Activated B cell treated with CpG ODN at 0.5 μM for 24 hours (primary cell): ENCODE measurements at regions of chr12 and their contacts with region 1.

Region 1: GRCh38 chr12:76763743-76764675 is at the start of gene ZDHHC17:
- DNase-seq: peak; percentile 96
- ATAC-seq: peak; percentile 87
- H3K4me3 Mint-ChIP-seq: peak within 1 kb of the TSS; percentile 97
- H3K27ac Mint-ChIP-seq: peak within 1 kb of the TSS; percentile 96
- H3K4me1 Mint-ChIP-seq: peaks cover 44% of the 10 kb centered on the region
- H3K27me3 Mint-ChIP-seq: no peaks in the 10 kb centered on the region
- CTCF ChIP-seq: no peak
- total RNA-seq, gene ZDHHC17: 51.8 and 70.8 TPM in 2 replicates

Region 2: DNA sequence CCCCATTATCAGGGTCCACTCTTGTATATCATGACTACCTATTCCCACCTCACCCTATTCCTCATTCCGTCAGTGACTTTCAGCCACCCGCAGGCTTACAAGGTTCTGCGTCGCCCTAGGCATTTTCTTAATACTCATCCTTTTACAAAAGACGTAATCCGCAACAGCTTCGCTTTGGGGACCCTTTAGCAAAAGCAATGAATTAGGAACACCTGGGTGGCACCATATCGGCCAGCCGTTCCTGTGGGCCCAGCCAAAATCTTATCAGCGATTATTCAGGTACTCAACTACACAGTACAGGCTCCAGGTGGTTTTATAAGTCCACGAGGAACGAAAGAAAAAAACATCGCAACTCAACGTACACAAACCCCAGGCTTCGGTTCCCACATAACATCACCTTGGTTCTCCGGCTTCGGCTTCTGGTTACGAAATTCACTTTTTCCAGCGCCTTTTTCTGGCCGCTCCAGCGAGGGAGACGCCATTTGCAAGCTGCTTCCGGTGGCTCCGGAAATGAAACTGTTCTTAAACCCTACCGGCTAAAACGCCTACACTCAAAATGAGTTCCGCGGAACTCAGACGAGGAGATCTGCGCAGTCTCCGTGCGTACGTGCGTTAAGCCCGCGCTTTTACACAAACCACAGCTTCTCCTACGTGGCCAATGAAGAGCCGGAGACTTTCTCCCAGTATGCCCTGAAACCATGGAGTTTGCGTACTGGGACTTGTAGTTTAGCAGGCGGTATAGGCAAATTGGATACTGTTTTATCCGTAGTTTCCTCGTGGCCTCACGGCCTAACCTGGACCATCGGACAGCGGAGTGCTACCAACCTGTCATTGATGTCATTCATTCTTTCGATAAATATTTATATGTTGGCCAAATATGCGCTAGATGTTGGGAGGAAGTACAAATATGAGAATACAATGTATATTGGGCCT is 1252.6 kb before region 1 on chr12 and contains the start of gene KRR1:
- CTCF ChIA-PET with region 1: no interaction called
- POLR2A ChIA-PET with region 1: interaction called, 3 read pairs
- intact Hi-C with region 1: loop called (anchors 1 kb)
- DNase-seq: peak; percentile 72
- ATAC-seq: peak; percentile 96
- H3K4me3 Mint-ChIP-seq: peak within 1 kb of the TSS; percentile 99
- H3K27ac Mint-ChIP-seq: peak within 1 kb of the TSS; percentile 99
- H3K4me1 Mint-ChIP-seq: peaks cover 27% of the 10 kb centered on the region
- H3K27me3 Mint-ChIP-seq: no peaks in the 10 kb centered on the region
- CTCF ChIP-seq: no peak
- total RNA-seq, gene KRR1: 75.0 and 85.1 TPM in 2 replicates

Region 3: GRCh38 chr12:76348079-76348901 is 415.7 kb before region 1 on chr12 and contains the start of gene BBS10:
- CTCF ChIA-PET with region 1: no interaction called
- POLR2A ChIA-PET with region 1: interaction called, 4 read pairs
- intact Hi-C with region 1: loop called (anchors 1 kb)
- DNase-seq: peak; percentile 81
- ATAC-seq: peak; percentile 98
- H3K4me3 Mint-ChIP-seq: peak within 1 kb of the TSS; percentile 95
- H3K27ac Mint-ChIP-seq: peak within 1 kb of the TSS; percentile 93
- H3K4me1 Mint-ChIP-seq: peaks cover 35% of the 10 kb centered on the region
- H3K27me3 Mint-ChIP-seq: no peaks in the 10 kb centered on the region
- CTCF ChIP-seq: no peak
- total RNA-seq, gene BBS10: 7.9 and 8.0 TPM in 2 replicates

Region 4: DNA sequence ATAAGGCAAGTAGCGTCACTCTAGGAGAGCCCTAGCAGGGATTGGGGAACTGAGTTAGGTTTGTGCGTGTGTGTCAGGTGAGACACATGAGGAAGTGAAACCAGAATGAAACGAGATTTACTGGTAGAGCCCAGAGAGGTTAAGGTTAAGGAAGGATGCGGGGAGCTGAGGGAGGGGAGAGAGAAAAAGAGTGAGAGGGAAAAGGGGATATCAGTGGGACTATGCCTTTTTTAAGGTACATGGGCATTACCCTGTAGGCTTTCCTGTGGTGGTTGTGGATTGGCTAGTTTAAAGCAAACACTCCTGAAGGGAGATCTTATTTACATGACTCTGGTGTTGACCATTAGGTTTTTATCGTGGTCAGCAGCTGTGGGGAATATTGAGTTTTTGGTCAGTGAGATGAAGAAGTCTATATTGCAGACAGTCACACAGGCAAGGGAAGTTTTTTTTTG is 13.8 kb after region 1 on chr12:
- CTCF ChIA-PET with region 1: interaction called, 10 read pairs
- POLR2A ChIA-PET with region 1: interaction called, 18 read pairs
- intact Hi-C with region 1: loop called (anchors 1 kb)
- DNase-seq: no peak
- ATAC-seq: peak; percentile 99
- H3K4me3 Mint-ChIP-seq: peak overlapping the region; percentile 24
- H3K27ac Mint-ChIP-seq: peak overlapping the region; percentile 79
- H3K4me1 Mint-ChIP-seq: peaks cover 60% of the 10 kb centered on the region
- H3K27me3 Mint-ChIP-seq: no peaks in the 10 kb centered on the region
- CTCF ChIP-seq: no peak

Region 5: DNA sequence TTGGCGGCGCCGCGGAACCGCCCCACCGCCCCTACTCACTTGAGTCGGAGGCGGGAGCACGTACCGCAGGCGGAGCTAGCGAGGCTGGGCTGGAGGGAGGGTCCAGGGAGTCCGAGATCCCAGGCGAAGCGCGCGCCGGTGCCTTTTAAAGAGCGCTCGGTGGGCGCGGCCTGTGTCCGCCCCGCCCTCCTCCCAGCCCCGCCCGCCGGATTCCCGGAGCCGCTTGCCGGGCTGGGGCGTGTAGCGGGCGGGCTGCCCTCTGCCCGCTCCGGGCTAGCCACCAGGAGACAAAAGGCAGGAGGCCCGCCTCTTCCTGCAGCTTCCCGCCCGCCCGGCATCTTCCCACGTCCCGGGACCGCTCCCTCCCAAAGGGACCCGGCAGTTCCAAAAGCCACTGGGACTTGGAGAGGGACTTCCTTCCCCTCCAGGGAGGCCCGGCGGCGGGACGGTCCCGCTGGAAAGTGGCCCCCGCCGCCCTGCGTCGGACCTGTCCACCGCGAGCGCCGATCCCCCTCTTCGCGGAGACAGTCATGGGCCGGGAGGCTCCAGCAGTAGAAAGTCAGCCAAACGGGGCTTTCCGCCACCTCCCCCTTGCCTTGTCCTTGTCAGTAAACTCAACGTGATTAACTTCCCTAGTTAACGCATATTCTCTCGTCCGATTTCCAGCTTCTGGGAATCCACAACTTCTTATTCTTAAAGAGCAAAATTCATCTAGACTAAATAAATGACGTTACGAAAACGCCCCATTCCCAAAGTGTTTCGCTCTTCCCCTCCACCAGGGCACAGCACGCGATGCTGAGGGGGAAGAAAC is 115.1 kb after region 1 on chr12 and contains the start of gene CSRP2:
- CTCF ChIA-PET with region 1: no interaction called
- POLR2A ChIA-PET with region 1: no interaction called
- intact Hi-C with region 1: loop called (anchors 5 kb)
- DNase-seq: peak; percentile 55
- ATAC-seq: peak; percentile 84
- H3K4me3 Mint-ChIP-seq: peak within 1 kb of the TSS; percentile 95
- H3K27ac Mint-ChIP-seq: no peak within 1 kb of the TSS
- H3K4me1 Mint-ChIP-seq: peaks cover 16% of the 10 kb centered on the region
- H3K27me3 Mint-ChIP-seq: peaks cover 56% of the 10 kb centered on the region
- CTCF ChIP-seq: no peak
- total RNA-seq, gene CSRP2: 1.2 and 1.6 TPM in 2 replicates

Region 6: GRCh38 chr12:76920172-76921014 is 156.4 kb after region 1 on chr12:
- CTCF ChIA-PET with region 1: no interaction called
- POLR2A ChIA-PET with region 1: no interaction called
- intact Hi-C with region 1: no loop called
- DNase-seq: no peak
- ATAC-seq: no peak
- H3K4me3 Mint-ChIP-seq: no peak overlapping the region
- H3K27ac Mint-ChIP-seq: no peak overlapping the region
- H3K4me1 Mint-ChIP-seq: no peaks in the 10 kb centered on the region
- H3K27me3 Mint-ChIP-seq: no peaks in the 10 kb centered on the region
- CTCF ChIP-seq: no peak